Activated B cell treated with CpG ODN at 0.5 μM for 24 hours (primary cell): ENCODE measurements at regions of chr20 and their contacts with region 1.

Region 1: GRCh38 chr20:3082306-3082951 is 2.1 kb downstream of the AVP start:
- DNase-seq: no peak
- ATAC-seq: peak; percentile 45
- H3K4me3 Mint-ChIP-seq: peak overlapping the region; percentile 78
- H3K27ac Mint-ChIP-seq: no peak overlapping the region
- H3K4me1 Mint-ChIP-seq: peaks cover 17% of the 10 kb centered on the region
- H3K27me3 Mint-ChIP-seq: peaks cover 57% of the 10 kb centered on the region
- CTCF ChIP-seq: no peak

Region 2: DNA sequence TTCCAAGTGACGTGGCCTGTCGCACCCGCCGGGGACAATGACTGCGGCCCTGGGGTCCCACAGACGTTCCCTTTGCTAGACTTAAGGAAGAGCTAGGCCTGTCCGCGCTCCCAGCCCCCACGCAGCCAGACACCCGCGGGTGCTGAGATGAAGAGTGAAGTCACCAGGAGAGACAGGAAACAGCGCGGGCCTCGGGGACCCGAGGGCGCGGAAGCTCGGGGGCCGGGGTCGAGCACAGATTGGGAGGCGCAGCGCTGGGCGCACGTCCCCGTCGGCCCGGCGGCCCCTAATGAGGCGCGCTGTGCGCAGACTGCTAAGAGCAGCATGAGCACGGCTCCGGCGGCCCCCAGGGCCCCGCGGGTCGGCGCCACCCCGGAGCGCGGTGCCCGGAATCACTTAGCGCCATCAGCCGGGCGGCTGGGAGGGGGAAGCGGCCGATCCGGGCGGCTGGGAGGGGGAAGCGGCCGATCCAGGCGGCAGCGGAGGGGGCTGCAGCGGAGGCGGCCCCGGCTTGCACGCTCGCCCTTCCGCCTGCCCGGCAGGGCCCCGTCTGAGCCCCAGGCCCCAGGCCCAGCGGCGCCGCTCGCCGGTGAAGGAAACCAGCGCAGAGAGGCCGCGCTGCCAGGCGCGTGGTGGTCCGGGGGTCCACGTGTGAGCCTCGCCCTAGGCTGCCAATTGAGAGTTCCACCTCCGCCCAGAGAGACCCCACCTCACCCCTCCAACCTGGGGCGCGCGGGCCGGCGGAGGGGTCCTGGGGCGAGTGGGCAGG is 10.4 kb after region 1 on chr20:
- CTCF ChIA-PET with region 1: no interaction called
- POLR2A ChIA-PET with region 1: interaction called, 4 read pairs
- intact Hi-C with region 1: loop called (anchors 2 kb)
- DNase-seq: peak; percentile 47
- ATAC-seq: peak; percentile 54
- H3K4me3 Mint-ChIP-seq: peak overlapping the region; percentile 94
- H3K27ac Mint-ChIP-seq: peak overlapping the region; percentile 95
- H3K4me1 Mint-ChIP-seq: peaks cover 23% of the 10 kb centered on the region
- H3K27me3 Mint-ChIP-seq: peaks cover 22% of the 10 kb centered on the region
- CTCF ChIP-seq: no peak

Region 3: GRCh38 chr20:3101737-3102574 is 19.5 kb after region 1 on chr20:
- CTCF ChIA-PET with region 1: no interaction called
- POLR2A ChIA-PET with region 1: interaction called, 10 read pairs
- intact Hi-C with region 1: no loop called
- DNase-seq: no peak
- ATAC-seq: peak; percentile 42
- H3K4me3 Mint-ChIP-seq: no peak overlapping the region
- H3K27ac Mint-ChIP-seq: no peak overlapping the region
- H3K4me1 Mint-ChIP-seq: peaks cover 11% of the 10 kb centered on the region
- H3K27me3 Mint-ChIP-seq: peaks cover 5% of the 10 kb centered on the region
- CTCF ChIP-seq: no peak